Posterior vena cava (tissue), 2 donors: ENCODE measurements at regions of chr9 and their contacts with region 1.

Region 1: DNA sequence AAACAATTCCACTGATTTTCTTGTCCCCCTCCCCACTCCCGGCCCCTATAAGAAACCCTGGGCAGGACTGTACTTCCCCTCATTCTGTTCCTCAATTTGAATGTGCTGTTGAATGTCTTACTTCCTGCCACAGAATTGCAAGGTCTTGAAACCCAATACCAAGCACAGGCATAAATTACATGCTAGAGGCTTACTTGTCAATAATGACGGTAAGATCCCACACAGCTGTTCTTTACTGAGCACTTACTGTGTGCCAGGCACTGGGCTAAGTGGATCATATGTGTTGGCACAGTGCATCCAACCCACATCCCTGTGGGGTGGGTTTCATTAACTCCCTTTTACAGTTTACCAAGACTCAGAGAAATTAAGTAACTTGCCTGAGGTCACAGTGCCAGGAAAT is 63.4 kb downstream of the MVB12B start:
- DNase-seq: no peak

Region 2: DNA sequence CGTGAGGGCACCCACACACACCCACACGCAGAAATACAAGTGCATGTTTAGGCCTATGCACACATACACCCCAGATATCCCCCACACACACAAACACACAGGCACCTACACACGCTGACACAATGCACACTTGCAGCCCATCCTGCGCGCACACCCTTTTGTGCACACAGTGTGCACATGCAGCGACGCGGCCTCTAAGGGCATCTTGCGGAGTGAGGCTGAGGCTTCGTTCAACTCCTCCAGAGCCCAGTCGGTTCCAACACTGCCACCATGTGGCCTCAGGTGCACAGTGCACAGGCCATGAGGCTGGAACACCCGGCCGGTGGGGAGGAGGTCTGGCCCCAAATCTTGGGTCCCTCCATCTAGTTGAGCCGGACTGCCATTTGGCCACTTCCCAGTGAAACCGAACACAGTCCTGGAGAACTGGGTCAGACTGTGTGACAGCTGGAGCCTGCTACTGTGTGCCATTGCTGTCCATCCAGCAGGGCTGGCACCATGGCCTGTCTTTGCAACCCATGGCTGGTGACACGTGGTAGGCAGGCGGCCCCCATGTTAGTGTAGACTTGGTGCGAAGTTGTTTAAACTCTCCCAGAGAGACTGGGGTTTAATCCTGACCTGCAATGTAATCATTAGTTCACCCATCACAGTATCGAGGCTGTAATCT is 161.1 kb before region 1 on chr9:
- intact Hi-C with region 1: loop called in 1 of 2 experiments (anchors 2 kb)
- DNase-seq: peak; percentile 91